Heart right ventricle (tissue), 16 donors: ENCODE measurements at regions of chr14 and their contacts with region 1.

Region 1: DNA sequence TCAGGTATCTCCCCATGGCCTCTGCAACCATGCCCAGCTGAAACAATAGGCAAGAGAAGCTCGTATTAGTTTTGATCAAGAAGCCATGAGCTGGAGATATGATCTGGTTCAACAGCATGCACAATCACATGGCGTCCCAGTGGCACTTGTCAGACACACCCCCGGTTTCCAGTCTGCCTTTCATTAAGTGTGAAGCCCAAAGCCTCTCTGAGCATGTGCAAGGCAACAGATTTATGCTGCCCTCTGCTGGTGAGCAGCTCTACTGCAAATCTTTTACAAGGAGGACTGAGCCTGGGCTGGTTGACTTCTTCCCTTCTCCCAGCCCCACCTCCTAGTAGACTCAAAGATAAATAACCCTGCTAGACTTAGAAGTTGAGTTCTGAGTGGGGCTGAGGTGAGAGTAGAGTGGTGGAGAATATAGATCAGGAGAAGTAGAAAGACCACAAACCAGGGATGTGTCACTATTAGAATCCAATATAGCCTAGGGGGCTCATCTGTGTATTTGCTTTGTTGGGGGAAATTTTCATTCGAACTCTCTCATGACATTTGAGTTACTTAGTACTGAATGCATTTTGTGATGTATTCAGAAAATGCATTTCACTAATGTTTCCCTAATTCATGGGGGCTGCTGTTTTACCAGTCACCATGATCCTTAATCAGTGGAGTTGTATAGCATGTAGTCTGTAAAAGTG is 53.7 kb upstream of the MBIP start:
- DNase-seq: peak; percentile 18 to 58
- ATAC-seq: peak in 6 of 8 donors; percentile 55 to 81 (median 61)
- H3K4me3 ChIP-seq: no peak overlapping the region
- H3K27ac ChIP-seq: no peak overlapping the region
- H3K4me1 ChIP-seq: no peaks in the 10 kb centered on the region
- H3K27me3 ChIP-seq: peaks cover 0 to 7% (median 0%) of the 10 kb centered on the region in 7 donors
- CTCF ChIP-seq: peak; percentile 40 to 85 (median 73)

Region 2: DNA sequence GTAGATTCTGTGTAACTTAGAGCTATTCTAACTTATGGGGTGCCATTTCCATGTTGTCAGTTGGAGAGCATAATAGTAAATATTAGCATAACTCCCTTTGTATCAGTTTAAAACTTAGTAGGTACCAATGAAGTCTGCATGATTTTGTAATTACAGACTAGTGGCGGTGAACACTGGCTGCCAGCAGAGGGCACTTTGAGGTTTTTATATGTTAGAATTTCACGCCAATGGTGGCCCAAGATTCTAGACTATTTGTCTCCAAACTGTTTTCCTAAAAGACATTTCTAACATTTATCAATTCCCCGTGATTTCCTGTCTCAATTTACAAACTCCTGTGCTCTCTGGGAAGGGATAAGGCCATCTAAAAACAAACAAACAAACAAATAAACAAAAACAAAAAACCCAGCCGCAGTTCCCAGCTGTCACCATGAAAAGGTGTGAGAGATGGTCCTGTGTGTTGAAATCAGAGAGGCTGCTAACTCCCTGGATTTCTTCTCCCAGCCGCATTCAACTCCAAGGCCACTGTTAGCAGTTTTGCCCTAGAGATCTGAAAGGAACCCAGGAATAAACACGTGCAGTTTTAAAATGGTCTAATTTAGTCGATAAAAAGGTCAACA is 490.3 kb before region 1 on chr14:
- intact Hi-C with region 1: loop called in 4 of 10 experiments (anchors 5 to 10 kb)
- DNase-seq: no peak
- ATAC-seq: no peak
- H3K4me3 ChIP-seq: no peak overlapping the region
- H3K27ac ChIP-seq: no peak overlapping the region
- H3K4me1 ChIP-seq: peaks cover 0 to 9% (median 5%) of the 10 kb centered on the region in 9 donors
- H3K27me3 ChIP-seq: no peaks in the 10 kb centered on the region
- CTCF ChIP-seq: peak in 8 of 9 donors; percentile 10 to 66 (median 57)

Region 3: GRCh38 chr14:36227802-36228201 is 146.3 kb before region 1 on chr14:
- intact Hi-C with region 1: loop called in 1 of 10 experiments (anchors 10 kb)
- DNase-seq: no peak
- ATAC-seq: no peak
- H3K4me3 ChIP-seq: no peak overlapping the region
- H3K27ac ChIP-seq: no peak overlapping the region
- H3K4me1 ChIP-seq: no peaks in the 10 kb centered on the region
- H3K27me3 ChIP-seq: peaks cover 0 to 6% (median 0%) of the 10 kb centered on the region in 7 donors
- CTCF ChIP-seq: no peak

Region 4: GRCh38 chr14:36408388-36408787 is 34.3 kb after region 1 on chr14:
- intact Hi-C with region 1: no loop called
- DNase-seq: no peak
- ATAC-seq: no peak
- H3K4me3 ChIP-seq: no peak overlapping the region
- H3K27ac ChIP-seq: no peak overlapping the region
- H3K4me1 ChIP-seq: no peaks in the 10 kb centered on the region
- H3K27me3 ChIP-seq: peaks cover 0 to 6% (median 0%) of the 10 kb centered on the region in 7 donors
- CTCF ChIP-seq: no peak